K562 (cell line): ENCODE measurements at regions of chr19 and their contacts with region 1.

Region 1: GRCh38 chr19:38335949-38336637 is 463 bp downstream of the CATSPERG start:
- DNase-seq: peak; percentile 92 to 98 (median 94)
- ATAC-seq: peak; percentile 92
- H3K4me3 ChIP-seq: peak overlapping the region; percentile 85
- H3K27ac ChIP-seq: peak overlapping the region; percentile 88
- H3K4me1 ChIP-seq: peaks cover 13 to 34% of the 10 kb centered on the region in 2 experiments; a peak in 4 of 5 replicates
- H3K27me3 ChIP-seq: no peaks in the 10 kb centered on the region
- CTCF ChIP-seq: no peak
- EP300 ChIP-seq: no peak
- POLR2A ChIP-seq: peak; percentile 74
- RAD21 ChIP-seq: no peak

Region 2: DNA sequence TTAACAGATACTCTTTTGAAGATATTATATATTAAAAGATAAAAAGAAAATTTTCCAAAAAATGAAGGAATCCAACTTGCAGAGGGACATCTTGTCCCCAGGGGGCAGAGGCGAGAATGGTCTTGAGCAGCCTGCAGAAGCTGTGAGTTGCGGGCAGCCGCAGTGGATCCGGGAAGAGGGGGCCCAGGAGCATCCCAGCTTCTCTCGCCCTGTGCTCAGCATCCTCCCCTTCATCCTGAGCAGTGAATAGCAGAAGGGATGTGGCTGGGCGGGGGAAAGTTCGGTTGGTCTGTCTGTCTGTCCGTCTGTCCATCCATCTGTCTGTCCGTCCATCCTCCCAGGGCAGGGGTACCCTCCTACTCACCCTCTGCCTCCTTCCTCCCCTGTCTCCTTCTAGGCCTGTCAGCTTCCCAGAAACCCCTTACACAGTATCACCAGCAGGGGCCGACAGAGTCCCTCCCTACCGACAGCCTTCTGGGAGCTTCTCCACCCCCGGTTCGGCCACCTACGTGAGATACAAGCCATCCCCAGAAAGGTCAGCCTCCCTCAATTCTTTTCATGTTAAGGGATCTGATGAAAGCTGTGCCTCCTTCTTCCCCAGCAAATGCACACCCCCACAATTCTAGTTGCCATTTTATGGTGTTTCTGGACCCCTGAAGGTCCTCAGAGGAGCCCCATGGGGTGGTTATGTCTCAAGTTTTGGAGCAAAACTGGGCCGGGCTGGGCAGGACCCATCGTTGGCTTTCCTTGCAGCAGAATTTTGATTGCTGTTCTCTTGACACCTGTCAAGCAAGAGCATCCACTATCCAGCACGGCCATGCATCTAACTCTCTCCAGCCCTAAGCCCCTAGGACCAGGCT is 193.7 kb before region 1 on chr19:
- CTCF ChIA-PET with region 1: interaction called, 18 read pairs
- POLR2A ChIA-PET with region 1: no interaction called
- in situ Hi-C with region 1: loop called (anchors 5 kb)
- intact Hi-C with region 1: loop called (anchors 2 kb)
- DNase-seq: peak; percentile 75 to 85 (median 80)
- ATAC-seq: peak; percentile 94
- H3K4me3 ChIP-seq: no peak overlapping the region
- H3K27ac ChIP-seq: no peak overlapping the region
- H3K4me1 ChIP-seq: peaks cover 8 to 16% of the 10 kb centered on the region in 2 experiments; a peak in 4 of 5 replicates
- H3K27me3 ChIP-seq: no peaks in the 10 kb centered on the region
- CTCF ChIP-seq: peak; percentile 93 to 96 (median 96)
- EP300 ChIP-seq: no peak
- POLR2A ChIP-seq: no peak
- RAD21 ChIP-seq: peak; percentile 78 to 91

Region 3: GRCh38 chr19:38229585-38230073 is 106.5 kb before region 1 on chr19:
- CTCF ChIA-PET with region 1: interaction called, 17 read pairs
- POLR2A ChIA-PET with region 1: no interaction called
- in situ Hi-C with region 1: no loop called
- intact Hi-C with region 1: loop called (anchors 2 kb)
- DNase-seq: peak; percentile 94 to 99 (median 98)
- ATAC-seq: peak; percentile 97
- H3K4me3 ChIP-seq: no peak overlapping the region; the same call in 1 of the 2 replicates
- H3K27ac ChIP-seq: no peak overlapping the region
- H3K4me1 ChIP-seq: peaks cover 4 to 37% of the 10 kb centered on the region in 2 experiments; a peak in 4 of 5 replicates
- H3K27me3 ChIP-seq: peaks cover 2 to 6% of the 10 kb centered on the region in 2 experiments; a peak in 2 of 5 replicates
- CTCF ChIP-seq: 0 out of 6 replicates have a peak, but pooled peaks of 1 of the 3 experiments have one; percentile 14
- EP300 ChIP-seq: no peak
- POLR2A ChIP-seq: no peak
- RAD21 ChIP-seq: no peak

Region 4: GRCh38 chr19:38245826-38246498 is 90.1 kb before region 1 on chr19:
- CTCF ChIA-PET with region 1: interaction called, 41 read pairs
- POLR2A ChIA-PET with region 1: no interaction called
- in situ Hi-C with region 1: loop called (anchors 5 kb)
- intact Hi-C with region 1: loop called (anchors 1 kb)
- DNase-seq: no peak
- ATAC-seq: no peak
- H3K4me3 ChIP-seq: no peak overlapping the region
- H3K27ac ChIP-seq: no peak overlapping the region
- H3K4me1 ChIP-seq: peaks cover 7 to 24% of the 10 kb centered on the region in 2 experiments; a peak in 4 of 5 replicates
- H3K27me3 ChIP-seq: no peaks in the 10 kb centered on the region
- CTCF ChIP-seq: no peak
- EP300 ChIP-seq: no peak
- POLR2A ChIP-seq: no peak
- RAD21 ChIP-seq: no peak

Region 5: GRCh38 chr19:38315657-38316476 is 20.2 kb before region 1 on chr19 and contains the start of gene YIF1B:
- CTCF ChIA-PET with region 1: no interaction called
- POLR2A ChIA-PET with region 1: no interaction called
- in situ Hi-C with region 1: no loop called
- intact Hi-C with region 1: loop called (anchors 1 kb)
- DNase-seq: peak; percentile 97 to 98 (median 97)
- ATAC-seq: peak; percentile 88
- H3K4me3 ChIP-seq: peak within 1 kb of the TSS; percentile 90
- H3K27ac ChIP-seq: peak within 1 kb of the TSS; percentile 99
- H3K4me1 ChIP-seq: peaks cover 42 to 64% of the 10 kb centered on the region in 2 experiments
- H3K27me3 ChIP-seq: no peaks in the 10 kb centered on the region
- CTCF ChIP-seq: no peak
- EP300 ChIP-seq: no peak; the same call in 1 of the 2 replicates
- POLR2A ChIP-seq: peak; percentile 44
- RAD21 ChIP-seq: no peak
- polyA plus RNA-seq, gene YIF1B: 8.5 to 84.7 TPM

Region 6: GRCh38 chr19:38387550-38388348 is 51.7 kb after region 1 on chr19 and contains the start of gene GGN:
- CTCF ChIA-PET with region 1: no interaction called
- POLR2A ChIA-PET with region 1: interaction called, 4 read pairs
- in situ Hi-C with region 1: no loop called
- intact Hi-C with region 1: loop called (anchors 5 kb)
- DNase-seq: peak; percentile 90 to 96 (median 92)
- ATAC-seq: peak; percentile 85
- H3K4me3 ChIP-seq: peak within 1 kb of the TSS; percentile 49
- H3K27ac ChIP-seq: peak within 1 kb of the TSS; percentile 33; the same call in 2 of the 3 replicates
- H3K4me1 ChIP-seq: peaks cover 12 to 60% of the 10 kb centered on the region in 2 experiments; a peak in 4 of 5 replicates
- H3K27me3 ChIP-seq: no peaks in the 10 kb centered on the region
- CTCF ChIP-seq: no peak
- EP300 ChIP-seq: no peak
- POLR2A ChIP-seq: no peak
- RAD21 ChIP-seq: no peak
- polyA plus RNA-seq, gene GGN: not detected